Motor neuron (in vitro differentiated cells): ENCODE measurements at regions of chrX and their contacts with region 1.

Region 1: DNA sequence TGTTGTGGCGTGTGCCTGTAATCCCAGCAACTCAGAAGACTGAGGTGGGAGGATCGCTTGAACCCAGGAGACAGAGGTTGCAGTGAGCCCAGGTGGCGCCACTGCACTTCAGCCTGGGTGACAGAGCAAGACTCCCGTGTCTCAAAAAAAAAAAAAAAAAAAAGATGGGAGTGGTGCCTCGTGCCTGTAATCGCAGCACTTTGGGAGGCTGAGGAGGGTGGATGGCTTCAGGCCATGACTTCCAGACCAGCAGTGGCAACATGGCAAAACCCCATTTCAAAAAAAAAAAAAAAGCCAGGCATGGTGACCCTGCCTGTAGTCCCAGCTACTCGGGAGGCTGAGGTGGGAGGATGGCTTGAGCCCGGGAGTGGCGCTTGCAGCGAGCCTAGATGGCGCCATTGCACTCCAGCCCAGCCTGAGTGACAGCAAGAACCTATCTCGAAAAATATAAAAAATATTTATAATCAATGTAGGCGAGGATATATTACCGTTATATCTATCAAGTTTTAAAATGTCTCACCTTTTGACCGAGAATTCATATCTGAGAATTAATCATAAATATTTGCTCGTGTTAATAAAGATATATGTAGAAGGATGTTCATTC is 27.0 kb downstream of the EIF2S3 start:
- ATAC-seq: peak; percentile 55 to 89 (median 69)
- H3K4me3 ChIP-seq: no peak overlapping the region
- H3K27ac ChIP-seq: no peak overlapping the region
- H3K4me1 ChIP-seq: no peaks in the 10 kb centered on the region

Region 2: GRCh38 chrX:24241822-24242648 is 160.3 kb after region 1 on chrX:
- in situ Hi-C with region 1: loop called in 3 of 9 experiments (anchors 25 kb)
- ATAC-seq: peak in 3 of 8 experiments; percentile 16 to 65 (median 33)
- H3K4me3 ChIP-seq: no peak overlapping the region
- H3K27ac ChIP-seq: no peak overlapping the region
- H3K4me1 ChIP-seq: no peaks in the 10 kb centered on the region

Region 3: DNA sequence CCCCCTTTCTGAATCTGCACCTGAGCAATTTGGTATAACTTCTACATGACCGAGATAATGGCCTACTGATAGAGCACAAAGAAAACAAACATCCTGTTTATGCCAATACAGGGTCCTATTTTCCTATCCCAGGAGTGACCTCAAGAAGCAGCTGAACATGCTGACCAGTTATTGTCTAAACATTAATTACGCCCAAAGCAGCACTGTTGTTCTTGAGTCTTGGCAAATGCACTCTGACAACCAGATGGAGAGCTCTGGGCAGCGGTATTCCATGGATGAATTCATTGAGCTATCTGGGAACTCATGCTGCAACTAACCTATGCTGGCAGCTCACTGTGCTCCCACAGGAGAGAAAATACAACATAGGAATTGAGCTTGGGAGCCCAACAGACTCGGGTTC is 512.7 kb after region 1 on chrX:
- in situ Hi-C with region 1: no loop called
- ATAC-seq: no peak
- H3K4me3 ChIP-seq: no peak overlapping the region
- H3K27ac ChIP-seq: no peak overlapping the region
- H3K4me1 ChIP-seq: no peaks in the 10 kb centered on the region

Region 4: GRCh38 chrX:24702362-24703184 is 620.8 kb after region 1 on chrX:
- in situ Hi-C with region 1: no loop called
- ATAC-seq: no peak
- H3K4me3 ChIP-seq: no peak overlapping the region
- H3K27ac ChIP-seq: no peak overlapping the region
- H3K4me1 ChIP-seq: no peaks in the 10 kb centered on the region